OCI-LY7 (cell line): ENCODE measurements at regions of chr4 and their contacts with region 1.

Region 1: DNA sequence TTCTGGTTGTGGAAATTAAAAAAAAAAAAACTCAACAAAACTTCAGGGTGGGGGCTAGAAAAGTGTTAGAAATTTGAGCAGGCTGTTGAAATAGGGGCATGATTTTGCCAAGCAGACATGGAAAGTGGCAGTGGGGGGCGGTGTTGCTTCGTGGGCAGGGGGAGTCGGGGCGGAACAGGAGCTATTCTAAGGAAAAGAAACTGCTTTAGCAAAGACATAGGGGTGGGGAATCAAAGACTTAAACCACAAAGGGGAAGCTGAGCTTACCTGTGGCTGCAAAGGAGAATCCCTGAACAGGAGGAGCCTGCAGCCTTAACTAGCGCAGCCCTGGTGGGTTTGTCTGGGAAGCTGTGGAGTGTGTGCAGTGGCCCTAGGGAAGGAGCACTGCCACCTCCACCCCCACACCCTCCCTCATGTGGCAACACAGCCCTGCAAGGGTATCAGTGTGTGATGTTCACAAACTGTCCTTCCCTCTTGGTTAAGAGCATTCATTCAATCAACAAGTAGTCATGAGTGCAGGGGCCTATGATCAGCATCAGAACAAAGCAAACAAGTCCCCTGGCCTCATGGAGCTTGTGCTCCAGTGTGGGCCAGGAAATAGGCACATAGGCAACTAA is 20.5 kb downstream of the SEL1L3 start:
- DNase-seq: peak; percentile 72
- H3K4me3 ChIP-seq: no peak overlapping the region
- H3K27ac ChIP-seq: peak overlapping the region; percentile 9
- H3K4me1 ChIP-seq: peaks cover 44% of the 10 kb centered on the region
- CTCF ChIP-seq: peak; percentile 86

Region 2: GRCh38 chr4:25925486-25926201 is 83.3 kb after region 1 on chr4:
- CTCF ChIA-PET with region 1: no interaction called
- POLR2A ChIA-PET with region 1: no interaction called
- intact Hi-C with region 1: loop called (anchors 5 kb)
- DNase-seq: peak; percentile 59
- H3K4me3 ChIP-seq: no peak overlapping the region
- H3K27ac ChIP-seq: no peak overlapping the region
- H3K4me1 ChIP-seq: peaks cover 18% of the 10 kb centered on the region
- CTCF ChIP-seq: peak; percentile 86

Region 3: DNA sequence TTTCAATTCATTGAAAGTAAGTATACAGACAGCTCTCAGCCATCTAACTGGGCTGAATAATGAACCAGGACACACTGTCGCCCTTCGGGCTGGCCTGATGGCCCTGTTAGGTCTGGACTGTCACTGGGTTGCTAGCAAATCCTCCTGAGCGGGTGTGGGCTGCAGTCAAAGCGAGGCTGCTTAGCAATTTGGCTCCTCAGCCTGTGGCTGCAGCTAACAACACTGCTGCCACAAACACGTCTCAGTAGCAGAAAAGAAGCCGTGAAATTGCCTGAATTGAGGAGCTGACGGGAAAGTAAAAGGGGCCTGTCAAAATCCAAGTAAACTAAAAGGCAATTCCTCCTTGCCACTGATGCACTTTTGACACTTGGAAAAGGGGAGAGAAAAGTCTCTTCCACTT is 144.5 kb after region 1 on chr4:
- CTCF ChIA-PET with region 1: no interaction called
- POLR2A ChIA-PET with region 1: no interaction called
- intact Hi-C with region 1: loop called (anchors 5 kb)
- DNase-seq: no peak
- H3K4me3 ChIP-seq: no peak overlapping the region
- H3K27ac ChIP-seq: no peak overlapping the region
- H3K4me1 ChIP-seq: peaks cover 8% of the 10 kb centered on the region
- CTCF ChIP-seq: no peak

Region 4: DNA sequence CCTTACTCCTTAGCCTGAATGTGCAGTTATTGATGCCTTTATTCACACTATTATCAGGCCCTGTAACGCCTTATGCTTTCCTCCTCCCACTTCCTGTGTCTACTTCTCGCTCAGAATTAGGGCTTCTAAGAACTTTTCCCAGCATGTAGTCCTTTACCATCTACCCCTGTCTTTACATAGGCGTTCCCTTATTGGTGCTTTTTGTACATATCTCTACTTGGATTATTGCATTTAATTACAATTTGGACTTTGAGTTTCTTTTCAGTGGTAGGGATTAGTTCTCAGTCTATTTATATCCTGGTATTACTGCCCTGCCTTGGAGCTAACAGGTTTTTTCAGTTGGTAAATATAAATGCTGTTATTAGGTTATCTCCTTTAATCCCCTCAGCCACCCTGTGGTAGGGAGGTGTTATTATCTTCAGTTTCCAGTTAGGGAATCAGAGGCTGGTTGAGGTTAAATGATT is 562.4 kb after region 1 on chr4:
- CTCF ChIA-PET with region 1: no interaction called
- POLR2A ChIA-PET with region 1: no interaction called
- intact Hi-C with region 1: loop called (anchors 5 kb)
- DNase-seq: no peak
- H3K4me3 ChIP-seq: no peak overlapping the region
- H3K27ac ChIP-seq: no peak overlapping the region
- H3K4me1 ChIP-seq: peaks cover 25% of the 10 kb centered on the region
- CTCF ChIP-seq: peak; percentile 37; the same call in 1 of the 2 replicates